Activated CD4-positive, alpha-beta T cell treated with anti-CD3 and anti-CD28 coated beads for 36 hours (primary cell): ENCODE measurements at regions of chr6 and their contacts with region 1.

Region 1: GRCh38 chr6:109308018-109308492 is 74.2 kb downstream of the CD164 start:
- DNase-seq: peak; percentile 75
- ATAC-seq: peak; percentile 91
- H3K4me3 Mint-ChIP-seq: no peak overlapping the region
- H3K27ac Mint-ChIP-seq: peak overlapping the region; percentile 76
- H3K4me1 Mint-ChIP-seq: peaks cover 35% of the 10 kb centered on the region
- H3K27me3 Mint-ChIP-seq: no peaks in the 10 kb centered on the region

Region 2: GRCh38 chr6:109202409-109203284 is 105.4 kb before region 1 on chr6:
- CTCF ChIA-PET with region 1: no interaction called
- POLR2A ChIA-PET with region 1: no interaction called
- intact Hi-C with region 1: loop called in 1 of 2 experiments (anchors 1 kb)
- DNase-seq: peak; percentile 59
- ATAC-seq: peak; percentile 95
- H3K4me3 Mint-ChIP-seq: no peak overlapping the region
- H3K27ac Mint-ChIP-seq: peak overlapping the region; percentile 59
- H3K4me1 Mint-ChIP-seq: peaks cover 14% of the 10 kb centered on the region
- H3K27me3 Mint-ChIP-seq: no peaks in the 10 kb centered on the region